CD8-positive, alpha-beta memory T cell (primary cell): ENCODE measurements at regions of chr3 and their contacts with region 1.

Region 1: DNA sequence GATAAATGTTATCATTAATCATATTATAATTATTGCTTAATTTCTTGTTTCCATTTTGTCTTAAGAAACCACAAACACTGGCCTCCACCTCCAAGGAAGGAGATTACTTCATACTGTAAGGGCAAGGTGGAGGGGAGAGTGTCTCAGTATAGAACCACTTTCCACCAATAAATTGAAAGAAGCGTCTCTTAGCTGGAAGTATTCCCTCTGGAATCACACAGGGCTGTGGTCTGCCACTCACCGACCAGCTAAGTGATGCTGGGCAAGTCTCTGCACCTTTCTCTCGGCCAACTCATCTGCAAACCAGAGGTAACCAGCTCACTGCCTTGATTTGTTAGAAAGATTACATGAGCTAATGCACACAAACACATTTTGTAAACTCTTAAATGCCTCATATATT is 63.1 kb downstream of the EIF4E3 start:
- DNase-seq: no peak
- H3K4me3 ChIP-seq: no peak overlapping the region
- H3K4me3 Mint-ChIP-seq: no peak overlapping the region
- H3K27ac ChIP-seq: no peak overlapping the region
- H3K27ac Mint-ChIP-seq: peak overlapping the region in 2 of 8 donors; percentile 5 to 17
- H3K4me1 ChIP-seq: peaks cover 13% of the 10 kb centered on the region
- H3K4me1 Mint-ChIP-seq: peaks cover 43 to 59% (median 53%) of the 10 kb centered on the region in 3 donors
- H3K27me3 ChIP-seq: no peaks in the 10 kb centered on the region
- H3K27me3 Mint-ChIP-seq: no peaks in the 10 kb centered on the region

Region 2: DNA sequence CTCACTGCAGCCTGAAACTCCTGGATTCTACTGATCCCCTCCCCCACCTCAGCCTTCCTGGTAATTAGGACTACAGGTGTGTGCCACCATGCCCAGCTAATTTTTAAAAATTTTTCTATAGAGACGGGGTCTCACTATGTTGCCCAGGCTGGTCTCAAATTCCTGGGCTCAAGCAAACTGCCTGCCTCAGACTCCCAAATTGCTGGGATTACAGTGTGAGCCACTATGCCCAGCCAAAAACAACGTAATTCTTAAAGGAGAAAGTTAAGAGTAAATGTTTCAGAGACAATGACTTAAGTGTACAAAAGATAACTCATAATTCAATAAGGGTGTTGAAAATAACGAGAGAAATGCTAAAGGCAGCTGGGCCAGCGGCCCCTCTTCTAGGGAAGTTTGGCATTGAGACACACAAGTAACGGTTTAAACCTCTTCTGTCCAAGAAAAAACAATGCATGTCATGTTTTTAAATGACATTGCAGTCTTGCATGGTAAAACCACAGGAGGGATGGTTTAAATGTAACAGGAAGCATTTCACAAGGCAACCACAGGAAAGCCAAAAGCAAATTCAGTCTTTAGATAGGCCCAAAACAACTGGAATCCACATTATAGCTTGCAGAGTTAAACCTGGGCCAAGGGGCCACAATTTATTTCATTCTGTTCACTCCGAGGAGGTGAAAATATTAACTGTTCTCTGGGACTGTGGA is 117.8 kb after region 1 on chr3:
- CTCF ChIA-PET with region 1: no interaction called
- POLR2A ChIA-PET with region 1: interaction called, 11 read pairs
- DNase-seq: peak in 1 of 5 donors; percentile 10
- H3K4me3 ChIP-seq: no peak overlapping the region
- H3K4me3 Mint-ChIP-seq: peak overlapping the region in 2 of 7 donors; percentile 25 to 59
- H3K27ac ChIP-seq: no peak overlapping the region
- H3K27ac Mint-ChIP-seq: peak overlapping the region in 2 of 8 donors; percentile 31 to 71
- H3K4me1 ChIP-seq: peaks cover 8% of the 10 kb centered on the region
- H3K4me1 Mint-ChIP-seq: peaks cover 18 to 34% (median 26%) of the 10 kb centered on the region in 3 donors
- H3K27me3 ChIP-seq: peaks cover 40% of the 10 kb centered on the region
- H3K27me3 Mint-ChIP-seq: peaks cover 57 to 82% of the 10 kb centered on the region in 2 donors